ENCODE measurements at regions of chr4 and their contacts with region 1.

Region 1: DNA sequence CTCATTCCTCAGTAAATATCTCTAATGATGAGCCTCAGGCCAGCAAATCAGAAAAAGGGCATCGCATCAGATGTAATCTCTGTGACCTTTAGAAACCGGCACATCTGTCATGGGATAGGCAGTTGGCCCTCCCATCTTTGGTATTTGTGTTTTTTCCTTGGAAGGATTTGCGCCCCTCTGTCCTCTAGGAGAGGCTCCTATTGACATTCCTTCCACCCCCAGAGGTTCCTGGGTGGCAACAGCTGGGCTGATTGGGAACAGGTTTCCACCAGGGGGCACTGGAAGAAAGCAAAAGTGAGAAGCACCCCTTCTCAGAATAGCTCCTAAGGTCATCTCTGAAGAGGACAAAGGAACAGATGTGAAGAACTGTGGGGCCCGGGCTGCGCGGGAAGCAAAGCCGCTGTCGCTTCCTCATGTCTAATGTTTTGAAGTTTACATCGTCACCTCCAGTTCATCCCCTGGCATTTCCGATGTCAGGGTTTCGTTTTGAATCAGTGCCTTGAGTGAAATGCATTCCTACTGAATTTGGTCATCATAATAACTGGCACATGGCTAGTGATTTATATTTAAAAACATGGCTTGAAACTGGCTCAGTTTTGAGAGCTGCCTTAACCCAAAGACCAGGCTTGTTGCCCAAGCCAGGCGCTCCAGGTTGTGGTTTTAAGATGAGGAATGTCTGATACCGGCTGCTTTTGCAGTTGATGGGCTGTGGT is 6.2 kb downstream of the TXK start:
- DNase-seq: peak; percentile 93
- H3K4me3 Mint-ChIP-seq: peak overlapping the region; percentile 78
- H3K27ac Mint-ChIP-seq: peak overlapping the region; percentile 93
- H3K4me1 Mint-ChIP-seq: peaks cover 73% of the 10 kb centered on the region
- H3K27me3 Mint-ChIP-seq: no peaks in the 10 kb centered on the region

Region 2: DNA sequence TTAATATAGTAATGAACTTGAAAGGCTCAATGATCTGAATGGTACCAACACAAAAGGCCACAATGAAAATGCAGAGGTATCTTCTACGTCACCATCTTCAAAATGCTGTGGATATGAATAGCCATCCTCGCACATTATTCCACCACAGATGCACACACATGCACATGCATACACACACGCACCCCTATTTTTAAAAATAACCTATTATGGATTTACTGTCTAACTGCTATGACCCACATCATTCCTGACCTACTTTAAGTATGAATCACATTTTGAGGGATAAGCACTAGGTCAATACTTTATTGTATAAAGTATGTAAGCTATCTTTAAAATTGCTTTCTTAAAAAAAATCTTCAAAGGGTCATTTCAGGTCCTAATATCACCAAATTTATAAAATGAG is 265.5 kb before region 1 on chr4:
- intact Hi-C with region 1: no loop called
- DNase-seq: no peak
- H3K4me3 Mint-ChIP-seq: no peak overlapping the region
- H3K27ac Mint-ChIP-seq: no peak overlapping the region
- H3K4me1 Mint-ChIP-seq: no peaks in the 10 kb centered on the region
- H3K27me3 Mint-ChIP-seq: no peaks in the 10 kb centered on the region

Region 3: DNA sequence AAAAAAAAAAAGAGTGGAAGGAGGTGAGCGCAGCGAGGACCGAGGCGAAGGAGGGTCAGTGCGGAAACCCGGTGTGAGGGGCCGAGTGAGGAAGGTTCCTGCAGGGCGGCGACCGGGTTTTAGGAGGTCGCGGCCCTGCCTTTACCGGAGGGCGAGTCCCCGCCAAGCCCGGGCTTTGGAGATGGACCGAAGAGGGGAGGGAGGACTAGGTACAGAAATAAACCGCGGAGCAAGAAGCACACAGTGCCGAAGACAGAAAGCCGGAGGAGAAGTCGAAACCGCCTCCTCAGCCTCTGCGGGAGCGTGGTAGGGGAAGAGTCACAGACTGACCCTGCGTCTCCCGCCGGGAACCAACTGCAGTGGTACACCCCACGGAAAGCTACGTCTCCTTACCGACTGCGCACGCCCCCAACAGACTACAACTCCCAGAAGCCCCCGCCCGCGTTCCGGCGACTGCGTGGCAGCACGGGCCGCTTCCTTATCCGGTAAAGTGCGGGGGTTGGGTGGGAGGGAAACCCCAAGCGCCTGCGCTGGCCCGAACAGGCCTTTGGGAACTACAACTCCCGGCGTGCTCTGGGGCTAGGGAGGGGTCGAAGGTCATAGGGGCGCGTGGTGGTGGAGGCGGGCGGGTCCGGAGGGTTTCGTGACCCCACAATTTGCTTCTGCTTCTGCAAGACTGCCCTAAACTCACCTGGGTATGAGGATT is 213.5 kb before region 1 on chr4 and contains the start of gene NFXL1:
- intact Hi-C with region 1: loop called (anchors 2 kb)
- DNase-seq: peak; percentile 98
- H3K4me3 Mint-ChIP-seq: peak within 1 kb of the TSS; percentile 84
- H3K27ac Mint-ChIP-seq: peak within 1 kb of the TSS; percentile 91
- H3K4me1 Mint-ChIP-seq: peaks cover 25% of the 10 kb centered on the region
- H3K27me3 Mint-ChIP-seq: peaks cover 7% of the 10 kb centered on the region
- total RNA-seq, gene NFXL1: 11.2 and 15.0 TPM in 2 replicates

Region 4: DNA sequence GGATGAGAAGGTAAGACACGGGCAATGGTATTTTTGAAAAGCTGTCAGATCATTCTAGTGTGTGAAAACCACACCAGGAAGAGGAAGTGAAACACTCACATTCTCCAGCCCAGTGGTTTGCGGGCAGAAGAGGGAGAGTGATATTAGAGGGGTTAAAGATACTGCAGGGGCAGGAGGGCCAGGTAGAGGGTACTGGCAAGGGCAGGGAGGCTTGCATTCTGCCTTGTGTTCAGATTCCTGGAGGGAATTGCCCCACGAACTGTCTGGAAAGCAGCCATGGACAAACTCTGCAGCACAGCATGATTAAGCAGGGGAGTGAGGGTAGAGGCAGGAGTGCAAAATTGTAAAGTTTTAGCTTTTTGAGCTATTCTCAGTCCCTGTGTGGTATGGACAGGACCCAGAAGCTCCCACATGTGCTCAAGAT is 80.4 kb before region 1 on chr4:
- intact Hi-C with region 1: loop called (anchors 1 kb)
- DNase-seq: peak; percentile 89
- H3K4me3 Mint-ChIP-seq: peak overlapping the region; percentile 38
- H3K27ac Mint-ChIP-seq: peak overlapping the region; percentile 61
- H3K4me1 Mint-ChIP-seq: peaks cover 39% of the 10 kb centered on the region
- H3K27me3 Mint-ChIP-seq: peaks cover 62% of the 10 kb centered on the region

Region 5: DNA sequence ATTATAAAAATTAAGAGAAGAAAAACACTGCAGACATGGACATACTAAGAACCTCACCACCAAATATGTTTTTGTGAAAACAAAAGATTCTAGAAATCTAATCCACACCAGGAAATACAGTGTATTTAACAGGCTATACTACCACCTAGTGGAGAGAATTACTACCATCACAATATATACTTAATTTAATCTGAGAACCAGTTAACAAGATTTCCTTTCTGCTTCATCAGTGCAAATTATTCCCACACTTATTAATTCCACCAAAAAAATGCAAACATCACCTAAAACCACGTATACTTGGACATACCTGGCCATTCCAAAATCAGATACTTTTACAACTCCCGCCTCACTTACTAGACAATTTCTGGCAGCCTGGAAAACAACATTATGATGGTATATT is 13.2 kb after region 1 on chr4:
- intact Hi-C with region 1: loop called (anchors 1 kb)
- DNase-seq: peak; percentile 48
- H3K4me3 Mint-ChIP-seq: no peak overlapping the region
- H3K27ac Mint-ChIP-seq: no peak overlapping the region
- H3K4me1 Mint-ChIP-seq: peaks cover 44% of the 10 kb centered on the region
- H3K27me3 Mint-ChIP-seq: no peaks in the 10 kb centered on the region

Region 6: DNA sequence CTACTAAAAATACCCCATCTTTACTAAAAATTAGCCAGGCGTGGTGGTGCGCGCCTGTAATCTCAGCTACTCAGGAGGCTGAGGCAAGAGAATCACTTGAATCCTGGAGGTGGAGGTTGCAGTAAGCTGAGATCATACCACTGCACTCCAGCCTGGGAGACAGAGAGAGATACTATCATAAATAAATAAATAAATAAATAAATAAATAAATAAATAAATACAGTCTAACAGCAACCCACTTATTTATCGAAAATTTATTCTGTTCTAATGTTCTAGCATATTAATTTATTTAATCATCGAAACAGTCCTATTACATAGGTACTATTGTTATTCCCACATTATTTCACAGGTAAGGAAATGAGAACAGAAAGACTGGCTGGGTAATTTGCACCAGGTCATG is 24.4 kb after region 1 on chr4:
- intact Hi-C with region 1: no loop called
- DNase-seq: no peak
- H3K4me3 Mint-ChIP-seq: no peak overlapping the region
- H3K27ac Mint-ChIP-seq: no peak overlapping the region
- H3K4me1 Mint-ChIP-seq: peaks cover 2% of the 10 kb centered on the region
- H3K27me3 Mint-ChIP-seq: no peaks in the 10 kb centered on the region

Region 7: GRCh38 chr4:48269861-48270522 is 142.2 kb after region 1 on chr4:
- intact Hi-C with region 1: loop called (anchors 2 kb)
- DNase-seq: peak; percentile 95
- H3K4me3 Mint-ChIP-seq: peak overlapping the region; percentile 97
- H3K27ac Mint-ChIP-seq: peak overlapping the region; percentile 88
- H3K4me1 Mint-ChIP-seq: peaks cover 20% of the 10 kb centered on the region
- H3K27me3 Mint-ChIP-seq: no peaks in the 10 kb centered on the region

Region 8: GRCh38 chr4:48546336-48546735 is 418.5 kb after region 1 on chr4:
- intact Hi-C with region 1: loop called (anchors 10 kb)
- DNase-seq: peak; percentile 80
- H3K4me3 Mint-ChIP-seq: no peak overlapping the region
- H3K27ac Mint-ChIP-seq: no peak overlapping the region
- H3K4me1 Mint-ChIP-seq: peaks cover 5% of the 10 kb centered on the region
- H3K27me3 Mint-ChIP-seq: no peaks in the 10 kb centered on the region

Region 9: DNA sequence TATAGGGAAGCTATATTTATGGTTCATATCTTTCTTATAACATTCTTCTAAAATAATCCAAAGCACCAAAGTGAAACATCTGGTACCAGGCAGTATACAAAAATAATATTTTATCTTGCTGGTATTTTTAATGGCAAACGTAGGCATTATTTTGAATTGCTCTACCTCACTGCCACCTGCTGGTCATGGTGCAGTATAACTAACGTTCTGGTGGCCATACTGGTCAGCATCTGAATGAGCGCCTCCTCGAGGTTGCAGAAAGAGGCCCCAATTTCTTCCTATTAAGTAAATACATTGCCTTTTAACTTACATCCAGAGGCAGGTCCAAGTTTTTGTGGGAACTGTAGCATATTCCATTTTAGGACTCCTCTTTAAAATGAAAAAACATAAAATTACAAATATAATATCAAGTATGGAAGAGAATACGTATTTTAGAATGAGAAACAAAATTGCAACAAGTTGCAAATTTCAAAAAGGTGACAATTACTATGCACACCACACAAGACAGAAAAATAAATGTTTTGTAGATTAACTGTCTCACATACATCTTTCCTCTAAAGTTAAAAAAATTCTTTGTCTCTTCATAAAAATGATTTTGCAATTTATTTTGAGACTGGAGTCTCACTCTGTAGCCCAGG is 835.3 kb after region 1 on chr4:
- intact Hi-C with region 1: loop called (anchors 10 kb)
- DNase-seq: peak; percentile 91
- H3K4me3 Mint-ChIP-seq: no peak overlapping the region
- H3K27ac Mint-ChIP-seq: no peak overlapping the region
- H3K4me1 Mint-ChIP-seq: no peaks in the 10 kb centered on the region
- H3K27me3 Mint-ChIP-seq: peaks cover 18% of the 10 kb centered on the region

Measured in activated CD4-positive, alpha-beta T cell treated with anti-CD3 and anti-CD28 coated beads, Interleukin-2, amount 10 ng/mL, durations not matched to agents 24 days and 14 days (primary cell).